WTC11 (cell line): ENCODE measurements at regions of chr7 and their contacts with region 1.

Region 1: GRCh38 chr7:101542527-101543241 is 86.4 kb downstream of the MYL10 start:
- DNase-seq: peak; percentile 95
- ATAC-seq: peak; percentile 69
- H3K4me3 Mint-ChIP-seq: no peak overlapping the region
- H3K27ac Mint-ChIP-seq: no peak overlapping the region; the same call in 1 of the 2 replicates
- H3K4me1 Mint-ChIP-seq: peaks cover 4% of the 10 kb centered on the region; the same call in 1 of the 2 replicates
- H3K27me3 Mint-ChIP-seq: no peaks in the 10 kb centered on the region
- CTCF ChIP-seq: peak; percentile 96

Region 2: DNA sequence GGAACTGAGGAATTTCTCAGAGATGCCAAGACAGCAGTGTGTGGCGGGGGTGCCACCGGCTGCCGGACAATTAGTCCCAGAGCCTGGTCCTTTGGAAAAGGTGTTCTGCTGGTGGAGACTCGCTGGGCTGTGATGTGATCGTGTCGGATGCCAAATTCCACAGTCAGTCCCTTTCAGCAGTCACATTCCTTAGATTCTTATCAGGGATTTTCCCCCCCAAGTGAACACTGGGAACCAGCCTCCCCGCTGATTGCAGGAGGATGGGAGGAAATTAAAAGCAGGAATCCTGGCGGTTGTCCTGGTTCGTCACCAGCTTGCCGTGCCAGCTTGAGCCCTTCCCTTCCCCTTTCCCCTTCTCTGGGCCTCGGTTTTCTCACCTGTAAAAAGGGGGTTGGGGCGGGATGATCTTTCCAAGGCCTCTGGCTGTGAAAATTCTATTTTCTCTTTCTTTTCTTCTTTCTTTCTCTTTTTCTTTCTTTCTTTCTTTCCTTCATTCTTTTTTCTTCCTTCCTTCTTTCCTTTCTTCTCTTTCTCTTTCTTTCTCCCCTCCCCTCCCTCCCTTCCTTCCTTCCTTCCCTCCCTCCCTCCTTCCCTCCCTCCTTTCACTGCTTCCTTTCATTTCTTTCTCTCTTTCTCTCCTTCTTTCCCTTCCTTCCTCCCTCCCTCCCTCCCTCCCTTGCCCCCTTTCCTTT is 140.4 kb before region 1 on chr7:
- CTCF ChIA-PET with region 1: no interaction called
- POLR2A ChIA-PET with region 1: no interaction called
- DNase-seq: peak; percentile 83
- ATAC-seq: peak; percentile 87
- H3K4me3 Mint-ChIP-seq: peak overlapping the region; percentile 35
- H3K27ac Mint-ChIP-seq: peak overlapping the region; percentile 96
- H3K4me1 Mint-ChIP-seq: peaks cover 56% of the 10 kb centered on the region
- H3K27me3 Mint-ChIP-seq: no peaks in the 10 kb centered on the region
- CTCF ChIP-seq: no peak

Region 3: DNA sequence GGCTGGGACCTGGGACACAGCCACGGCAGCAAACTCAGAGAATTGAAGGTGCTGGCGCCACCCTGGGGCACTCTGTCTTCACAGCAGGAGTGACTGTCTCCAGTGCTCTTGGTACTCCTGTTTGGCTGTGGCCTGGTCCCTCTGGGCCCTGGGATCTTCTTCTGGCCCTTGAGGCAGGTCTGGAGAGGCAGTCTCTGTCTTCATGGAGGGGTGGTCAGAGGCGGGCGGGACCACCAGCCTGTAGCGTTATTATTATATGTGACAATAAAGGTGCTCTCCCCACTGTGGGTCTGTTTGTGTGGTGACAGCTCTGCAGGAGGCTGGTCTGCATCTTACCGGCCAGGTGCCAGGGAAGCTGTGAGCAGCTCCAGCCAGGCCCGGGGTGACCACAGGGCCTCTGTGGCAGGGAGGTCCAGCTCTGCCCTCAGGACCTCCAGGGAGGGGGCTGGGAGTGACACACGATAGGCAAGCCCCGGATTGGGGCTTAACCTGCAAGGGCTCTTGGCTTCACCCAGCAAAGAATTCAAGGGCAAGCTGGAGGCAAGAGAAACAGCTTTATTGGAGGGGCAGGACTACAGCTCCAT is 16.1 kb after region 1 on chr7:
- CTCF ChIA-PET with region 1: interaction called, 19 read pairs
- POLR2A ChIA-PET with region 1: no interaction called
- DNase-seq: no peak
- ATAC-seq: 0 out of 2 replicates have a peak, but pooled peaks have one; percentile 11
- H3K4me3 Mint-ChIP-seq: no peak overlapping the region
- H3K27ac Mint-ChIP-seq: no peak overlapping the region; the same call in 1 of the 2 replicates
- H3K4me1 Mint-ChIP-seq: peaks cover 14% of the 10 kb centered on the region
- H3K27me3 Mint-ChIP-seq: no peaks in the 10 kb centered on the region
- CTCF ChIP-seq: no peak

Region 4: DNA sequence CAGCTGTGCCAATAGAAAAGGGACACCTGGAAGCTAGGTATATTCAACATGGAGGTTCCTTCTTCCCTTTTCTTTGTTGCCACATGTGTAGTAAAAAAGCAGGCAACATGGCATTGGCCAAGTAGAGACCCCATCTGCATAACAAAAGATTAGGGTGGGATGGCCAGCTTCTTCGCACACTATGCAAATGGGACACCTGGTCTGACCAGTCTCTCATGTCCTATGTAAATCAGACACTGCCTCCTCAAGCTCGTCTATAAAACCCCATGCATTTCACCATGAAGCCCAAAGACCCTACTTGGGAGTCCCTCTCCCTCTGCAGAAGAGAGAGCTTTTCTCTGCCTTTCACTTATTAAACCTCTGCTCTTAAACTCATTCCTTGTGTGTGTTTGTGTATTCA is 32.5 kb after region 1 on chr7:
- CTCF ChIA-PET with region 1: interaction called, 10 read pairs
- POLR2A ChIA-PET with region 1: no interaction called
- DNase-seq: peak; percentile 52
- ATAC-seq: peak; percentile 98
- H3K4me3 Mint-ChIP-seq: peak overlapping the region; percentile 50
- H3K27ac Mint-ChIP-seq: peak overlapping the region; percentile 99
- H3K4me1 Mint-ChIP-seq: peaks cover 27% of the 10 kb centered on the region
- H3K27me3 Mint-ChIP-seq: no peaks in the 10 kb centered on the region; the same call in none of the 2 replicates
- CTCF ChIP-seq: no peak

Region 5: GRCh38 chr7:101602484-101603241 is 60.0 kb after region 1 on chr7:
- CTCF ChIA-PET with region 1: interaction called, 19 read pairs
- POLR2A ChIA-PET with region 1: no interaction called
- DNase-seq: peak; percentile 95
- ATAC-seq: peak; percentile 94
- H3K4me3 Mint-ChIP-seq: no peak overlapping the region
- H3K27ac Mint-ChIP-seq: 0 out of 2 replicates have a peak overlapping the region, but pooled peaks have one; percentile 41
- H3K4me1 Mint-ChIP-seq: no peaks in the 10 kb centered on the region
- H3K27me3 Mint-ChIP-seq: peaks cover 2% of the 10 kb centered on the region; the same call in 1 of the 2 replicates
- CTCF ChIP-seq: peak; percentile 82; the same call in 1 of the 2 replicates

Region 6: GRCh38 chr7:101804967-101805366 is 262.3 kb after region 1 on chr7:
- CTCF ChIA-PET with region 1: interaction called, 18 read pairs
- POLR2A ChIA-PET with region 1: no interaction called
- DNase-seq: peak; percentile 73
- ATAC-seq: peak; percentile 90
- H3K4me3 Mint-ChIP-seq: peak overlapping the region; percentile 62
- H3K27ac Mint-ChIP-seq: no peak overlapping the region
- H3K4me1 Mint-ChIP-seq: peaks cover 23% of the 10 kb centered on the region
- H3K27me3 Mint-ChIP-seq: peaks cover 17% of the 10 kb centered on the region
- CTCF ChIP-seq: peak; percentile 82

Region 7: GRCh38 chr7:101838837-101839483 is 296.3 kb after region 1 on chr7:
- CTCF ChIA-PET with region 1: no interaction called
- POLR2A ChIA-PET with region 1: no interaction called
- DNase-seq: peak; percentile 8
- ATAC-seq: no peak; the same call in 1 of the 2 replicates
- H3K4me3 Mint-ChIP-seq: no peak overlapping the region
- H3K27ac Mint-ChIP-seq: peak overlapping the region; percentile 89
- H3K4me1 Mint-ChIP-seq: peaks cover 36% of the 10 kb centered on the region
- H3K27me3 Mint-ChIP-seq: no peaks in the 10 kb centered on the region
- CTCF ChIP-seq: no peak